RWPE1 (cell line): ENCODE measurements at regions of chr17 and their contacts with region 1.

Region 1: GRCh38 chr17:412211-413015 is 59.8 kb upstream of the RPH3AL start:
- DNase-seq: peak; percentile 34
- H3K27ac ChIP-seq: peak overlapping the region; percentile 76
- CTCF ChIP-seq: peak; percentile 79

Region 2: DNA sequence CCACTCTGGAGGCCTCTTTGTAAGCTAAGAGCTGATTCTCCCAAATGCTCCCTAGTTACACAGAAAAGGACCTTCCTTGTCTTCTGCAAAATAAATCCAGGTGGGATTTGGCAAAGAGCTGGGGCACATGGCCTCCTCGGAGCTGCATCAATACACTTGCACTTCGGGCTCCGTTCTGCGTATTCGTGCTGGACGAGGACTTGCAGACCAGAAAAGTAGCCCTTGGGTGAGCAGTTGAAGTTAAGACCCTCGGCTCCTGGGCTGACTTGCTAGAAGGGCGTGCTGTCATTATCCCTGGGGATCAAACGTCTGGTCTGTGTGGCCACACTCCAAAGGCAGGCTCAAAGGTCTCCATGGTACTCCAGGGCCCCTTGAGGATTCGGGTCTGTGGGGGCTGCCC is 84.3 kb after region 1 on chr17:
- CTCF ChIA-PET with region 1: interaction called, 10 read pairs
- POLR2A ChIA-PET with region 1: no interaction called
- DNase-seq: no peak
- H3K27ac ChIP-seq: no peak overlapping the region
- CTCF ChIP-seq: no peak

Region 3: GRCh38 chr17:700504-701094 is 288.2 kb after region 1 on chr17:
- CTCF ChIA-PET with region 1: interaction called, 23 read pairs
- POLR2A ChIA-PET with region 1: interaction called, 3 read pairs
- DNase-seq: peak; percentile 50
- H3K27ac ChIP-seq: peak overlapping the region; percentile 20; the same call in 1 of the 2 replicates
- CTCF ChIP-seq: peak; percentile 69